Body of pancreas (tissue), 4 donors: ENCODE measurements at regions of chr19 and their contacts with region 1.

Region 1: DNA sequence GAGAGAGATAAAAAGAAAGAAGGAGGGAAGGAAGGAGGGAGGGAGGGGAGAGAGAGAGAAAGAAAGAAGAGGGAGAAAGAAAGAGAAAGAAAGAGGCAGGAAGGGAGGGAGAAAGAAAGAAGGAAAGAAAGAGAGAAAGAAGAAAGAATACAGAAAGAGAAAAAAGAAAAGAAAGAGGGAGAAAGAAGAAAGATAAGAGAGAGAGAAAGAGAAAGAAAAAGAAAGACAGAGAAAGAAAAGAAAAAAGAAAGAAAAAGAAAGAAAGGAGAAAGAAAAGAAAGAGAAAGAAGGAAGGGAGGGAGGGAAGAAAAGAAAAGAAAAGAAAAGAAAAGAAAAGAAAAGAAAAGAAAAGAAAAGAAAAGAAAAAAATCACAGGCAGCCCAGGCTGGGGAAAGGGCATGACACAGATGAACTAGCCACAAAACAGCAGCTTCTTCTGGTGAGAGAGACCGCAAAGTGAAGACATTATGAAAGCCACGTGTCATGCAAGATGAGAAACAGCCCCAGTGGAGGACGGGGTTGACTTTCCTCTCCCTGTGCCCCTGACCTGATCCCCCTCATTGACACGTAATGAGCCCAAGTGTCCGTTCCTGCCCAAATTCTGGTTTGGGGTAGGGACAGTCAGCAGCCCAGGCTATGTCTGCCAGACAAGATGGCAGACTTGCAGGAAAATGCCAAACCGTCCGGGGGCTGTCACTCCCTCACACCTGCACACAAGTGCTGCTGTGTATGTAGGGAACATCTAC is 102.1 kb downstream of the INSR start:
- DNase-seq: no peak
- ATAC-seq: no peak
- H3K4me3 ChIP-seq: no peak overlapping the region
- H3K27ac ChIP-seq: peak overlapping the region in 1 of 4 donors; percentile 5
- H3K4me1 ChIP-seq: peaks cover 56% of the 10 kb centered on the region
- H3K27me3 ChIP-seq: no peaks in the 10 kb centered on the region
- CTCF ChIP-seq: no peak
- POLR2A ChIP-seq: no peak

Region 2: DNA sequence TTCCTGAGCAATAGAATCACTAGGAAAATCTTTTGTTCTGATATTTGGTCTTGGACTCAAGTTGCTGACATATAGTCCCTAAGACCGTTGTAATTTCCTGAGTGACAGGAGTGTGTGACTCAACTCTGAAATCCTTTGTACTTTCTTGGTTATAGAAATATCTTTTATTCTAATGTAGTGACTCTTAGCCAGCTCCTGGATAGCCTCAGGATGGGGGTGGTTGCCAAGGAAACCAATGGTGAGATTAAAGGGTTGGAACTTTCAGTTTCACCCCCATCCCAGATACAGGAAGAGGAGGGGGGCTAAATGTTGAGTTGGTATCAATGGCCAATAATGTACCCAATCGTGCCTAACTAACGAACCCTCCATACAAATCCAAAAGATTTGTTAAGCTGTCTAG is 212.7 kb before region 1 on chr19:
- intact Hi-C with region 1: no loop called
- DNase-seq: no peak
- ATAC-seq: no peak
- H3K4me3 ChIP-seq: no peak overlapping the region
- H3K27ac ChIP-seq: no peak overlapping the region
- H3K4me1 ChIP-seq: no peaks in the 10 kb centered on the region
- H3K27me3 ChIP-seq: no peaks in the 10 kb centered on the region
- CTCF ChIP-seq: no peak
- POLR2A ChIP-seq: no peak

Region 3: DNA sequence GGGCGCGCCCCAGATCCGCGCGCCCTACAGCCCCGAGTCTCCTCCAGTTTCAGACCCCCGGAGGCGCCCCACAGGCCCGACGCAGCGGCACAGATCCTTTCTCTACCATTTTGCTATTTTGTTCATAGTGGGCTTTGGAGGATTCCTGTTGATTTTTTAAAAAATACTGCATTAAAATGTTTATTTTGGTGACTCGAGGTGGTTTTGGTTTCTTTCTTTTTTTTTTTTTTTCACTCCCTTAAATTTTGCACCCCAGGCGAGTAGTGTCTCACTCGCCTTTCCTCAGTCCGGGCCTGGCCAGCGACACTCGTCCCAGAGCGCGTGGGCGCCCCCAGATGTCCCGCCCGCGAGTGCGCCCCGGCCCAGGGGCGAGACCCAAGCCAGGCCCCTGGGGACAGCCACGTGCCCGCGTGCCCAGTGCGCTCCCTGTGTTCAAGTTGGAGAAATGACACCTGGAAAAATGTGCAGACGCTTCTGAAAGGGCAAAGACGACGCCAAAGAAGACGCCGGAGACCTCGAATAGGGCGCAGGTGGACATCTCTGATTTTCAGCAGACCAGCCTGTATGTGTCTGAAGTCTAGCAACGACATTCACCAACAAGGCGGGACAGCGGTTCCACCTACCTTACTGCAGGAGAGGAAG is 102.6 kb after region 1 on chr19:
- intact Hi-C with region 1: loop called (anchors 5 kb)
- DNase-seq: peak; percentile 83 to 91 (median 88)
- ATAC-seq: peak; percentile 69
- H3K4me3 ChIP-seq: peak overlapping the region in 1 of 2 donors; percentile 12
- H3K27ac ChIP-seq: peak overlapping the region; percentile 95 to 99 (median 98)
- H3K4me1 ChIP-seq: peaks cover 30% of the 10 kb centered on the region
- H3K27me3 ChIP-seq: no peaks in the 10 kb centered on the region
- CTCF ChIP-seq: peak; percentile 38 to 80 (median 70)
- POLR2A ChIP-seq: peak in 1 of 3 donors; percentile 34